Activated B cell treated with CpG ODN at 0.5 μM for 24 hours (primary cell): ENCODE measurements at regions of chr19 and their contacts with region 1.

Region 1: DNA sequence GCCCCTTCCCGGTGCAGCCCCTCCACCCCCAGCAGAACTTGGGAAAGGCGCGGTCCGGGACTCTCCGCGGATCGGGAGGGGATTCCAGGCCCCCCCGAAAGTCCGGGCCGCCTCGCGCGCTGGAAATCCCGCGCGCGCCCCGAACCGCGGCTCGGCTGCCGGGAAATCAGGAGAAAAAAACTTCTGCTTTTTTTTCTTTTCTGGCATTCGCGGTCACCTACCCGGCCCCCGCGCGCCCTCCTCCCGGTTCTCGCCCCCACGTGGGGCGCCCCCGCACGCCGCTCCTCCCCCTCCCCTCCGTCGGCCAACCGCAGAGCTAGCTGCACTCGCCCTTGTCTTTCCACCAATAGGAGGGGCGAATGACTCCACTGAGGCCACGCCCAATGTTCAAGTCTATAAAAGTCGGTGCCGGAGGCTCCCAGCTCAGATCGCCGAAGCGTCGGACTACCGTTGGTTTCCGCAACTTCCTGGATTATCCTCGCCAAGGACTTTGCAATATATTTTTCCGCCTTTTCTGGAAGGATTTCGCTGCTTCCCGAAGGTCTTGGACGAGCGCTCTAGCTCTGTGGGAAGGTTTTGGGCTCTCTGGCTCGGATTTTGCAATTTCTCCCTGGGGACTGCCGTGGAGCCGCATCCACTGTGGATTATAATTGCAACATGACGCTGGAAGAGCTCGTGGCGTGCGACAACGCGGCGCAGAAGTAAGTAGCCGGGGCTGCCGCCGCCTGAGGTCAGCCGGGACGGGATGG is at the start of gene GADD45B:
- DNase-seq: peak; percentile 96
- ATAC-seq: peak; percentile 59
- H3K4me3 Mint-ChIP-seq: peak within 1 kb of the TSS; percentile 99
- H3K27ac Mint-ChIP-seq: peak within 1 kb of the TSS; percentile 93
- H3K4me1 Mint-ChIP-seq: peaks cover 32% of the 10 kb centered on the region
- H3K27me3 Mint-ChIP-seq: no peaks in the 10 kb centered on the region
- CTCF ChIP-seq: no peak
- total RNA-seq, gene GADD45B: 291 and 302 TPM in 2 replicates

Region 2: GRCh38 chr19:2168619-2169424 is 307.1 kb before region 1 on chr19:
- CTCF ChIA-PET with region 1: no interaction called
- POLR2A ChIA-PET with region 1: interaction called, 13 read pairs
- intact Hi-C with region 1: loop called (anchors 5 kb)
- DNase-seq: peak; percentile 74
- ATAC-seq: peak; percentile 49
- H3K4me3 Mint-ChIP-seq: peak overlapping the region; percentile 84
- H3K27ac Mint-ChIP-seq: peak overlapping the region; percentile 92
- H3K4me1 Mint-ChIP-seq: peaks cover 84% of the 10 kb centered on the region
- H3K27me3 Mint-ChIP-seq: no peaks in the 10 kb centered on the region
- CTCF ChIP-seq: no peak

Region 3: DNA sequence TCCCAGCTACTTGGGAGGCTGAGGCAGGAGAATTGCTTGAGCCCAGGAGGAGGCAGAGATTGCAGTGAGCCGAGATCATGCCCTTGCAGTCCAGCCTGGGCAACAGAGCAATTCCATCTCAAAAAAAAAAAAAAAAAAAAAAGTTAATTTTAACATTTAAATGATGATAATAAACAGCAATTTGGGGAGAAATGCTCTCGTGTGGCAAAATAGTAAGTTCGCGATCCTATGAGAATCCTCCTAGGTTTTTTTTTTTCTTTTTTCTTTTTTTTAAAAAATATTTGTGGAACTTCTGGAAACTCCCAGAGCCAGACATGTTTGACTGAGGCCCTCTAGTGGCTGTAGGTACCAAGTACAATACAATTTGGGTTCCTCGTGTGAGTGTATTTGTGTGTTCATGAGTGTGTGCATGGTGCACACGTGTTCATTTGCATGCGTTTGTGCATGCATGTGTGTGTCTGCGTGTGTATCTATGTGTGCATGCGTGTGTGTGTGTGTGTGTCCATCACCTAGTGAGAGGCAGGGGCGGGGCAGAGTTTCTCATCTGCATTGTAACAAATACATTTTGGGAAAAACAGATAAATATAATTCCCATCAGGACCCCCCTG is 84.7 kb before region 1 on chr19:
- CTCF ChIA-PET with region 1: no interaction called
- POLR2A ChIA-PET with region 1: interaction called, 13 read pairs
- intact Hi-C with region 1: no loop called
- DNase-seq: no peak
- ATAC-seq: peak; percentile 56
- H3K4me3 Mint-ChIP-seq: no peak overlapping the region
- H3K27ac Mint-ChIP-seq: peak overlapping the region; percentile 74
- H3K4me1 Mint-ChIP-seq: peaks cover 34% of the 10 kb centered on the region
- H3K27me3 Mint-ChIP-seq: no peaks in the 10 kb centered on the region
- CTCF ChIP-seq: peak; percentile 82

Region 4: DNA sequence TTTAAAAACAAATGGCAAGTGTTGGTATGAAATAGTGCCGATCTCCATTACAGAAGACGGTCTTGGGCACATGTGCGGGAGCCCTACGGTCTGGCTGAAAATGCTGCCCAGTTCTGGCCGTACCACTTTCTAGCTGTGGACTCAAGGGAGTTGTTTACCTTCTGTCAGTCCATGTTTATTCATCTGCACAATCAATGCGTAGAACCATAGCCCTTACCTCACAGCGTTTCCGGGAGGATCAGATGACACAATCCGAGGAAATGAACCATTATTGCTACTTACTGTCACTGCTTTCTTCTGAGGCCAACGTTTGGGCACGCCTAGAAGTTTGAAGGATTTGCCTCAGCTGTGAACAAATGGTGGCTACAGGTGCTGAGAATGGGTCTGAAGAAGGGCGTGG is 31.2 kb after region 1 on chr19:
- CTCF ChIA-PET with region 1: no interaction called
- POLR2A ChIA-PET with region 1: interaction called, 14 read pairs
- intact Hi-C with region 1: loop called (anchors 5 kb)
- DNase-seq: no peak
- ATAC-seq: peak; percentile 14
- H3K4me3 Mint-ChIP-seq: peak overlapping the region; percentile 66
- H3K27ac Mint-ChIP-seq: peak overlapping the region; percentile 50
- H3K4me1 Mint-ChIP-seq: peaks cover 39% of the 10 kb centered on the region
- H3K27me3 Mint-ChIP-seq: no peaks in the 10 kb centered on the region
- CTCF ChIP-seq: no peak

Region 5: DNA sequence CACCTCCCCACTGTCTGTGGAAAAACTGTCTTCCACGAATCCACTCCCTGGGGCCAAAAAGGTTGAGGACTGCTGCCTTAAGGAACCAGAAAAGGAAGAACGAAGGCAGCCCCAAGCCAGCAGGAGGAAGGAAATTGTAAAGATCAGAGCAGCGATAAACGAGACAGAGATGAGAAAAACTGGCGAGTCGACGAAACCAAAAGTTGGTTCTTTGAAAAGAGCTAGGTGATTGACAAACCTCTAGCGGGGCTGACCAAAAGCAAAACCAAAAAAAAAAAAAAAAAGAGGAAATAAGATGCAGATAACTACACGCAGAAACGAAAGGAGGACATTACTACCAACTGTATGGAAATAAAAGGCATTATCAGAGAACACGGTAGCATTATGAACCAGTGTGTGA is 77.0 kb after region 1 on chr19:
- CTCF ChIA-PET with region 1: interaction called, 5 read pairs
- POLR2A ChIA-PET with region 1: interaction called, 125 read pairs
- intact Hi-C with region 1: loop called (anchors 1 kb)
- DNase-seq: peak; percentile 27
- ATAC-seq: peak; percentile 94
- H3K4me3 Mint-ChIP-seq: peak overlapping the region; percentile 75
- H3K27ac Mint-ChIP-seq: peak overlapping the region; percentile 89
- H3K4me1 Mint-ChIP-seq: peaks cover 28% of the 10 kb centered on the region
- H3K27me3 Mint-ChIP-seq: no peaks in the 10 kb centered on the region
- CTCF ChIP-seq: no peak

Region 6: GRCh38 chr19:2627319-2627829 is 151.5 kb after region 1 on chr19:
- CTCF ChIA-PET with region 1: interaction called, 4 read pairs
- POLR2A ChIA-PET with region 1: interaction called, 979 read pairs
- intact Hi-C with region 1: no loop called
- DNase-seq: peak; percentile 68
- ATAC-seq: peak; percentile 62
- H3K4me3 Mint-ChIP-seq: peak overlapping the region; percentile 76
- H3K27ac Mint-ChIP-seq: peak overlapping the region; percentile 94
- H3K4me1 Mint-ChIP-seq: peaks cover 95% of the 10 kb centered on the region
- H3K27me3 Mint-ChIP-seq: no peaks in the 10 kb centered on the region
- CTCF ChIP-seq: no peak